Panc1 (cell line): ENCODE measurements at regions of chr9 and their contacts with region 1.

Region 1: GRCh38 chr9:137253717-137254623 is 1.2 kb upstream of the NELFB start:
- DNase-seq: no peak
- ATAC-seq: peak; percentile 14; the same call in 1 of the 2 replicates
- H3K4me3 ChIP-seq: peak overlapping the region; percentile 58 to 72
- H3K27ac ChIP-seq: peak overlapping the region; percentile 77
- H3K4me1 ChIP-seq: peaks cover 16% of the 10 kb centered on the region
- H3K27me3 ChIP-seq: no peaks in the 10 kb centered on the region
- CTCF ChIP-seq: no peak

Region 2: GRCh38 chr9:137156567-137157375 is 97.2 kb before region 1 on chr9:
- CTCF ChIA-PET with region 1: no interaction called
- POLR2A ChIA-PET with region 1: interaction called, 17 read pairs
- in situ Hi-C with region 1: no loop called
- intact Hi-C with region 1: no loop called
- DNase-seq: no peak
- ATAC-seq: peak; percentile 74
- H3K4me3 ChIP-seq: peak overlapping the region; percentile 38 to 57
- H3K27ac ChIP-seq: no peak overlapping the region
- H3K4me1 ChIP-seq: peaks cover 4% of the 10 kb centered on the region; the same call in 1 of the 2 replicates
- H3K27me3 ChIP-seq: no peaks in the 10 kb centered on the region
- CTCF ChIP-seq: no peak

Region 3: GRCh38 chr9:137353223-137354152 is 99.5 kb after region 1 on chr9:
- CTCF ChIA-PET with region 1: no interaction called
- POLR2A ChIA-PET with region 1: no interaction called
- in situ Hi-C with region 1: no loop called
- intact Hi-C with region 1: no loop called
- DNase-seq: no peak
- ATAC-seq: no peak
- H3K4me3 ChIP-seq: no peak overlapping the region
- H3K27ac ChIP-seq: no peak overlapping the region
- H3K4me1 ChIP-seq: no peaks in the 10 kb centered on the region
- H3K27me3 ChIP-seq: no peaks in the 10 kb centered on the region
- CTCF ChIP-seq: no peak

Region 4: GRCh38 chr9:137396227-137396626 is 142.3 kb after region 1 on chr9:
- CTCF ChIA-PET with region 1: no interaction called
- POLR2A ChIA-PET with region 1: no interaction called
- in situ Hi-C with region 1: no loop called
- intact Hi-C with region 1: no loop called
- DNase-seq: no peak
- ATAC-seq: peak; percentile 82
- H3K4me3 ChIP-seq: no peak overlapping the region
- H3K27ac ChIP-seq: 0 out of 2 replicates have a peak overlapping the region, but pooled peaks have one; percentile 17
- H3K4me1 ChIP-seq: peaks cover 6% of the 10 kb centered on the region
- H3K27me3 ChIP-seq: no peaks in the 10 kb centered on the region
- CTCF ChIP-seq: no peak